Panc1 (cell line): ENCODE measurements at regions of chr5 and their contacts with region 1.

Region 1: GRCh38 chr5:135191084-135191826 is 157.2 kb upstream of the PITX1 start:
- DNase-seq: peak; percentile 32
- ATAC-seq: peak; percentile 98
- H3K4me3 ChIP-seq: peak overlapping the region; percentile 45 to 46
- H3K27ac ChIP-seq: 0 out of 2 replicates have a peak overlapping the region, but pooled peaks have one; percentile 26
- H3K4me1 ChIP-seq: peaks cover 3% of the 10 kb centered on the region; the same call in 1 of the 2 replicates
- H3K27me3 ChIP-seq: no peaks in the 10 kb centered on the region
- CTCF ChIP-seq: peak; percentile 98

Region 2: GRCh38 chr5:134289509-134290113 is 901.6 kb before region 1 on chr5:
- CTCF ChIA-PET with region 1: no interaction called
- POLR2A ChIA-PET with region 1: no interaction called
- in situ Hi-C with region 1: no loop called
- intact Hi-C with region 1: no loop called
- DNase-seq: peak; percentile 75
- ATAC-seq: peak; percentile 99
- H3K4me3 ChIP-seq: no peak overlapping the region
- H3K27ac ChIP-seq: no peak overlapping the region
- H3K4me1 ChIP-seq: no peaks in the 10 kb centered on the region
- H3K27me3 ChIP-seq: no peaks in the 10 kb centered on the region
- CTCF ChIP-seq: peak; percentile 83

Region 3: DNA sequence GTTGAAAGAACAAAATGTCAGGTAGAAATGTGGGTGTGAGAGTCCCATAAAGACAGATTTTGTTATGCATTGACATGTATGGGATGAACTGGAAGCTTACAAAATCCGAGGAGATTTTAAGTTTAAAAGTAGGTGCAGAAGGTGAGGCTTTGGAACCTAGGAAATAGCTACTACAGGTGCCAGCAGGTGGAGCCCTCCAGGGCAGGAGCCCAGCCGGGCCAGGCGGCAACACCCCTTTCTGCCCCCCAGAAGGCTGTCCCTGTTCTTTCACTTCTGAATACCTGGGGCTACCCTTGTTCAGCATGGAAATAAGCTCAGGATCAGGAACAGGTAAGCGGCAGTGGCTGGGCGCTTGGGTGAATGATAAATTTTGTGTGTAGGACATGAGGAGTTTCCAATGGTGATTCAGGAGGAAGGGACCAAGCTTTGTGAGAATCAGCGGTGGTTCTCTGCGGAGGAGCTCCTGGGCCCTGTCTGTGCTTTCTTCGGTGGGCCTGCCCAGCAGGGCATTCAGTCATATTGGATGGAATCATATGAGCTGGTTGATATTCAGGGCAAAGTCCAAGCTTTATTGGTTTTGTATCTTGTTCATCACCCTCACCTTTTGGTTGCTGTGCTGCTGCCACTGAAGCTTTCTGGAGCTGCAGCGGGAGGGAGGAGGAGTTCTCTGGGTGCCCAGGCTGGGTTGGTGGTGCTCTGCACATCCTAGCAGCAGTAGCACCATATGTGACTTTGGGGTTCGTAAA is 274.0 kb before region 1 on chr5:
- CTCF ChIA-PET with region 1: interaction called, 3 read pairs
- POLR2A ChIA-PET with region 1: no interaction called
- in situ Hi-C with region 1: no loop called
- intact Hi-C with region 1: loop called (anchors 5 kb)
- DNase-seq: no peak
- ATAC-seq: 0 out of 2 replicates have a peak, but pooled peaks have one; percentile 40
- H3K4me3 ChIP-seq: no peak overlapping the region
- H3K27ac ChIP-seq: no peak overlapping the region
- H3K4me1 ChIP-seq: no peaks in the 10 kb centered on the region
- H3K27me3 ChIP-seq: no peaks in the 10 kb centered on the region
- CTCF ChIP-seq: peak; percentile 74

Region 4: GRCh38 chr5:135034236-135034962 is 156.9 kb before region 1 on chr5:
- CTCF ChIA-PET with region 1: interaction called, 3 read pairs
- POLR2A ChIA-PET with region 1: no interaction called
- in situ Hi-C with region 1: no loop called
- intact Hi-C with region 1: loop called (anchors 5 kb)
- DNase-seq: no peak
- ATAC-seq: peak; percentile 64
- H3K4me3 ChIP-seq: peak overlapping the region; percentile 76 to 96
- H3K27ac ChIP-seq: peak overlapping the region; percentile 83
- H3K4me1 ChIP-seq: peaks cover 24% of the 10 kb centered on the region
- H3K27me3 ChIP-seq: no peaks in the 10 kb centered on the region
- CTCF ChIP-seq: no peak